Prostate gland (tissue), 2 donors: ENCODE measurements at regions of chr12 and their contacts with region 1.

Region 1: DNA sequence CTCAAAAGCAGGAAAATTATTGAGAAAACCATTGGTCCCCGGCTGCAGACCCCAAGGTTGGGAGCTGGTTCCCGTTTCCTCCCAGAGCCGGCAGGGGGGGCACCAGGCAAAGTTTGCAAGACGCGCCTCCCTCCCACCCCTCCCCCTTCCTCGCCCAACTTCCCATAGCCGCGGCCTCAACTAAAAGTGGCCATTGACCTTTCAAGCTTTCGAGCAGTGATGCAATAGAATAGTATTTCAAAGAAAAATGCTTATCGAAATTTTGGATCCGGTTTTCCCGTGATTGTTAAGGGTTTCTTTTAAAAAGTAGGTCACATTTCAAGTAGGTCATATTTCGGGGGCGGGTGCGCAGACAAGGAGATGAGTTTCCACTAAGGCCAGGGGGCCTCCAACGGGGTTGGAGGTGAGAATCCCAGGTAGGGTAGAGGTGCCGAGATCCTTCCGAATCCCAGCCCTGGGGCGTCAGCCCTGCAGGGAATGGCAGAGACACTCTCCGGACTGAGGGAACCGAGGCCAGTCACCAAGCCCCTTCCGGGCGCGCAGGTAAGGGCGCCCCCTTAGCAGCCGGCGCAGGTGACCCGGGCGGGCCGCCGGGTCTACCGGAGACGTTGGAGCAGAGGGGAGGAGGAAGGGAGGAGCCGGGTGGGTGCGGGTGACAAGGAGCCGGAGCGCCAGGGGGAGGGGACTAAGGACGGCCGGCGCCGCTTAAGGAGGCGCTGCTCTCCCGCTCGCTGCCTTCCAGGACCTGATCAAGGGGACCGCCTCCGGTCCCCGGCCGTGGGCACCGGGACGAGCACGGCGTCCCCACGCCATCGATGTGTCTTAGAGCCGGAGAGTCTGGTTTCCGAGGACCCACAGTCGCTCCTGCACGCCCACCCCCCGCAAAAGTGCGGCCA is 2.6 kb upstream of the SOCS2 start:
- DNase-seq: peak; percentile 83
- H3K4me3 ChIP-seq: peak overlapping the region; percentile 72 to 82
- H3K27ac ChIP-seq: peak overlapping the region; percentile 97 to 98
- H3K4me1 ChIP-seq: no peaks in the 10 kb centered on the region
- H3K27me3 ChIP-seq: no peaks in the 10 kb centered on the region
- CTCF ChIP-seq: peak; percentile 70 to 88 (median 88)
- POLR2A ChIP-seq: peak; percentile 24

Region 2: DNA sequence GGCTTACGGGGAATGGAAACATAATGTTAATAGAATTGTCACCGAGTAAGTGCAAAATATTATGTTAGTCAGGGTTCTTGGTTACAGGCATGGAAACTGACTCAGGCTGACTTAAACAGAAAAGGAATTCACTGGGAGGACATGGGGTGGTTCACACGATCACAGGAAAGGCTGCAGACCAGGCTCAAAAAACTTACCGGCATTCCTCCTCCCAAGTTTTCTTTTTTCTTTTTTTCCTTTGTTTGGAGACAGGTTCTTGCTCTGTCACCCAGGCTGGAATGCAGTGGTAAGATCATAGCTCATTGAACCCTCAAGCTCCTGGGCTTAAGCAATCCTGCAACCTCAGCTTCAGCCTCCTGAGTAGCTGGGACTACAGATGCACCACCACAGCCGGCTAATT is 116.3 kb before region 1 on chr12:
- intact Hi-C with region 1: no loop called
- DNase-seq: no peak
- H3K4me3 ChIP-seq: no peak overlapping the region
- H3K27ac ChIP-seq: no peak overlapping the region
- H3K4me1 ChIP-seq: no peaks in the 10 kb centered on the region
- H3K27me3 ChIP-seq: no peaks in the 10 kb centered on the region
- CTCF ChIP-seq: no peak
- POLR2A ChIP-seq: no peak

Region 3: DNA sequence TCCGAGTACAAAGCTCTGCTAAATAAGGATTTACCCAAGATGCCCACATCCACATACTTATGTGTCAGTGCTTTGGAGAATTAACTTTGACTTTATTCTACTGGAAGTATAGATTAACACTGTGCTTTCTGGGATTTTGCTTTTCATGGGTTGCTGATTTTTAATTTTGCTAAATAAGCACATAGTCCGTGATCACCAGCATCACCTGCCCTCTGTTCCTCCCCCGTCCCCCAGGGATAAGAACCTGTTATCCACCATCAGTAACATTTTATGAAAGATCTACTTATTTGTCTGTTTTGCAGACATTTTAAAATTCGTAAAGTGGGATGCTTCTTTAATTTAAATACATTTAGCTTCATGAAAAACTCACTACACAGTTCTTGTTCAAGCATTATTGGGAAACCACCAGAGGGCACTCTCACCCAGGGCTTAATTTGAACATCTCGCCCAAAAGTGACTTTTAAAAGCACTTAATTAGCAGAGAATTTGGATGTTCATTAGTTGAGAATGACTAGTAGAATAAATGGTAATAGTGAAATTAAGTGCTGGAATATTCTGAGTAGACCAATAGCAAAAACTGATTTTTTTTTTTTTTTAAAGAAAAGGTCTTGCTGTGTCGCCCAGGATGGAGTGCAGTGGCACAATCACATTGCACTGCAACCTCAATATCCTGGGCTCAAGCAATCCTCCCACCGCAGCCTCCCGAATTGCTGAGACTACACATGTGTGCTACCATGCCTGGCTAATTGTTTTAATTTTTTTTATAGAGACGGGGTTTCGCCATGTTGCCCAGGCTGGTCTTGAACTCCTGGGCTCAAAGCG is 66.9 kb before region 1 on chr12:
- intact Hi-C with region 1: loop called (anchors 5 kb)
- DNase-seq: peak; percentile 36
- H3K4me3 ChIP-seq: no peak overlapping the region
- H3K27ac ChIP-seq: no peak overlapping the region
- H3K4me1 ChIP-seq: no peaks in the 10 kb centered on the region
- H3K27me3 ChIP-seq: no peaks in the 10 kb centered on the region
- CTCF ChIP-seq: peak; percentile 54 to 87 (median 83)
- POLR2A ChIP-seq: no peak

Region 4: DNA sequence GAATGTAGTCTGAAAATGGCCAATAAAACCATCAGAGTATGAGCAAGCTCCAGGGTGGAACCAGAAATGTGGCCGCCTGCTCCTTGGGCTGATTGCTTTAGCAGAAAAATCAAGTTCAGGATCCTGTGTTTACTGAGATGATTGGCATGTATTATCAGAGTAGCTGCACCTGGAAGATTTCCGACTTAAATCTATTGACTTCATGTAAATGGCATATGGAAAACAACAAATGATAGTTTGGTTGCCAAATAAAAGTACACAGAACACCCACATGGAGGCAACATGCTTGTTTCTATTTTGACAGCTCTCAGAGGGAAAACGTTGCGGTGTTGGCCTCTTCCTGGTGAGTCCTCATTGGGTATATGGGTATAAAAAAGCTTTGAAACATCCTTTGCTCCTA is 33.9 kb after region 1 on chr12:
- intact Hi-C with region 1: no loop called
- DNase-seq: no peak
- H3K4me3 ChIP-seq: no peak overlapping the region
- H3K27ac ChIP-seq: peak overlapping the region in 1 of 2 donors; percentile 63
- H3K4me1 ChIP-seq: peaks cover 3% of the 10 kb centered on the region
- H3K27me3 ChIP-seq: no peaks in the 10 kb centered on the region
- CTCF ChIP-seq: no peak
- POLR2A ChIP-seq: no peak

Region 5: DNA sequence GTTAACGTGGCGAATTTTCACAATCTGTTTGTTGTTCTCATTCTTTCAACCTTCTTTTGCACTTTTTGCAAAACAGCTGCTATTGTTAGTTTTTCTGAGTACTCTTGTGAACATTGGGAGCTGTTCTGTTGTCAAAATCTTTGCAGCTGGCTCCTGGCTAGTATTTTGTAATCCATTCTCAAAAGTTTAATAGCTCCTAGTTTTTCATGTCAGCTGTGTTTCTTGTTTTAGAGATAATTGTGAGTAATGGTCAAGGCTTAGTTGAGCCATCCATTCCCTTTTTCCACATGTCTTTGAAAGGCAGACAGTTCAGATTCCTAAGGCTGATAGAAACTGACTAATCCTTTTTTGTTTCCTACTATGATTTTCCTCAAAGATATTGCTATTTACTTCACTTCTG is 68.2 kb after region 1 on chr12:
- intact Hi-C with region 1: loop called (anchors 10 kb)
- DNase-seq: no peak
- H3K4me3 ChIP-seq: no peak overlapping the region
- H3K27ac ChIP-seq: no peak overlapping the region
- H3K4me1 ChIP-seq: no peaks in the 10 kb centered on the region
- H3K27me3 ChIP-seq: no peaks in the 10 kb centered on the region
- CTCF ChIP-seq: no peak
- POLR2A ChIP-seq: no peak

Region 6: DNA sequence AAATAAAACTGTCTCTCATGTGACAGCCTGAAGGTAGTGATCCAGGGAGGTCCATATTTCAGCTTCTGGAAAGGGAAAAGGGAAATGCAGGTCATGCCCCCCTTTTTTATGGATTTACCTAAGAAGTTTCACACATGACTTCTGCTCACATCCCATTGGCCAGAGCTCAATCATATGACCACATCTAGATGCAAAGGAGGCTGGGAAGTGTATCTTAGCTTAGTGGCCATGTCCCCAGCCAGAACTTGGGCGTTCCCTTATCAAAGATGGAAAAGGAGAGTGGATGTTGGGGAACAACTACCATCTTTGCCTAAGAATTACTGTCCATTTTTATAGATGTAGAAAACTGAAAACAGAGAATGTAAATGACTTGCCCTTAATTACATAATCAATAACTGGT is 80.7 kb after region 1 on chr12:
- intact Hi-C with region 1: no loop called
- DNase-seq: no peak
- H3K4me3 ChIP-seq: no peak overlapping the region
- H3K27ac ChIP-seq: no peak overlapping the region
- H3K4me1 ChIP-seq: no peaks in the 10 kb centered on the region
- H3K27me3 ChIP-seq: no peaks in the 10 kb centered on the region
- CTCF ChIP-seq: no peak
- POLR2A ChIP-seq: no peak

Region 7: DNA sequence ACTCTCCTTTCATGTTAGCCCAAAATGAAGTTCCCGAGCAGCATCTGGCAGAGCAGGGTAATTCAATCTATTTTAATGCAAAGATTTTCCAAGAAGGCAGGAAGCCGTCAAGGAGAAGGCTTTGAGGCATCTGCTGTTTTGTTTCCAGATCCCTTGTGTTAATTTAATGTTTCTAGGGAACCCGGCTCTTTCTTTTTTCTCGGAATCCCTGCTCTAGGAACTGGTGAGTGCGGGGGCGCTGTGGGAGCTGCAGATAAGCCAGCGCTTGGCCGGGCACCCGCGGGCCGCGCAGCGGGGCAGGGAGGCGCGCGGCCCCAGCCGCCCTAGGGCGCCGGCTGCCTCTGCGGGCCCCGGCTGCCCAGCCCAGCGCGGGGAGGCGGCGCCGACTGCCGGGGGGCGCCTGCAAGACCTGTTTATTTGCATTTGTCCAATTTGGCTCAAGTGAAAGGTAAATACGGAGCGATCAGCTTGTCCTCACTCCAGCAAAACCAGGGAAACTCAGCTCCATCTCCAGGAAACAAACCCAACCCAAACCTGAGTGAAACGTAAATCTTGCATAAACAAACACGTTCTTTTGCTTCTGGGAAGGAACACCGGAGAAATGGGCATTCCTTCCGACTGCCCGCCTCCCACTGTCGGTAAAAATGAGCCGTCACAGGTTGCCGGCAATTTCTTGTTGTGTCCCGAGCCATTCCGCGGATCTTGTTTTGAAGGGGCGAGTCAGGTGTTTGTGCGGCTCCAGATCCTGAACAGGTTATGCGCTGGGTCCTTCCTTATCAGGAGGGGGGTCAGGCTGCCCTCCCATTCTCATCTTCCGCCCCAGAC is 172.4 kb after region 1 on chr12:
- intact Hi-C with region 1: loop called (anchors 1 kb)
- DNase-seq: peak; percentile 86
- H3K4me3 ChIP-seq: peak overlapping the region; percentile 35 to 38
- H3K27ac ChIP-seq: peak overlapping the region; percentile 89 to 95
- H3K4me1 ChIP-seq: peaks cover 13% of the 10 kb centered on the region
- H3K27me3 ChIP-seq: no peaks in the 10 kb centered on the region
- CTCF ChIP-seq: peak in 3 of 4 experiments; percentile 34 to 74 (median 65)
- POLR2A ChIP-seq: peak; percentile 17

Region 8: DNA sequence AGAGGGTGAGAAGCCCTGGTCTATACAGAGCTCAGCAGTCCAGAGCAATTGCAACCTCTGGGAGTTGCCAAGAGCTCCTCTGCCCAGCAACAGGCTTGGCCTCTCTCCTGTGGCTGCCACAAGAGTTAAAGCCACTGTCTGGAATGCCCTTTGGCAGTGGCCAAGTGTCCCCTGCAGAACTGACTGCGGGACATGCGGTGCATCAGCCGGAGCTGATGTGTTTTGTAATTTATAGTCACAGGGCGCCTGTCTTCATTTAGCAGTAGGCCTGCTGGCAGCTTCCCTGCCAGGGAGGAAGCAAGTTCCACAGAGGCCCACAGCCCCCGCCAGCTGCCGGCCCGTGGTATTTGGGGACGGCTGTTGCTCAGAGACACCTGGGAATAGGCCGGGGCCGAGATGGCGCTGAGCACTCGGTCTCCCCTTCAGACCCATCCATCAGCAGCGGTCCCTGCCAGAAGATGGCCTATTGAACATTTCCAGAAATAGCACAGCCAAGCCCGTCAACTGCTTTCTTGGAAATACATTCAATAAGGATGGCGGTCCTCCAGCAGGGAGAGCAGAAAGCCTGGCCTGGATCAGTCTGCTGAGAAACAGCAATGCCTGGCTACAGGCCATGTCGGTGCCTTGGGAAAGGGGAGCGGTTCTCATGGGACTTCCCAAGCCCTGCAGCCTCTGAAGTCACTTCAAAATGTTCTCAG is 324.6 kb after region 1 on chr12:
- intact Hi-C with region 1: loop called (anchors 5 kb)
- DNase-seq: peak; percentile 84
- H3K4me3 ChIP-seq: no peak overlapping the region
- H3K27ac ChIP-seq: peak overlapping the region; percentile 53 to 64
- H3K4me1 ChIP-seq: peaks cover 14% of the 10 kb centered on the region
- H3K27me3 ChIP-seq: no peaks in the 10 kb centered on the region
- CTCF ChIP-seq: peak in 1 of 4 experiments; percentile 5
- POLR2A ChIP-seq: no peak

Region 9: DNA sequence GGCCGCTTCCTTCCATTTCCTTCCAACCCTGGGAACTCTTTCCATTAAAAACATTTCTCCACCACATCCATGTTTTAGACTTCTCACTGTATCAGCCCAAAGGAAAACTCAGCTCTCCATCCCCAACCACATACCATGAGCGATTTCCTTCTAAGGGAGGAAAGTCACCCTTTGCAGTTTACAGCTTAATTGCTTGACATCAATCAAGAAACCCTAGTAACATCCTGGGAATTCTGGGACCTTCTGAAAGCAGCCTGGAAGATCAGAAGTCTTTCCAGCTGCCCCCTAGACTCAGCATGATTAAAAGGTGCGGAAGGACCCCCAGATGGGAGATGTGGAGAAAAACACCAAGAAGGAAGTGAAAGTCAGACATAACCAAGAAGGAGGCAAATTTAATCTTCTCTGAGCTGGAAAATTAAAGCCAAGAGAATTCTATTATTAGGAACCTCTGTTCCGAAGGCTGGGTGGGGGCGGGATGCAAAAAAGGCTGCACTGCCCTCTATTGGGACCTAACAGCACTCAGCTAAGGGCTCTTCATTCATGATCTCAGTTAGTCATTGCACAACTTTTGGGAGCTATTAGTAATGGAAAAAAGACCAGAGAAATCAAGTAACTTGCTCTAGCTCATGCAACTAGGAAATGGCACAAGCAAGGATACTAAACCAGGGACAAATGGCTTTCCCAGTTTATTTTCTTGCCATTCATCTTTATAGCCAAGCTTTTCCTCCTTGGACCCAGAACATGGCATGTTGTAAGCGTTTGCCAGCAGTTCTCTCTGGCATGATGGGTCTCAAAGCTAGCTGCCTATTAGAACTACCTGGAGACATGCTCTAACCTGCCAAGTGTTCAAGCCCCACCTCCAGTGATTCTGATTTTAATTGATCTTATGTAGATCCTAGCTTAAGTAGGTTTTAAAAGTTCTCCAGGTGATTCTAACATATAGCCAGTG is 505.4 kb after region 1 on chr12:
- intact Hi-C with region 1: loop called (anchors 5 kb)
- DNase-seq: peak; percentile 49
- H3K4me3 ChIP-seq: no peak overlapping the region
- H3K27ac ChIP-seq: peak overlapping the region; percentile 11 to 45
- H3K4me1 ChIP-seq: no peaks in the 10 kb centered on the region
- H3K27me3 ChIP-seq: no peaks in the 10 kb centered on the region
- CTCF ChIP-seq: peak in 3 of 4 experiments; percentile 46 to 57 (median 57)
- POLR2A ChIP-seq: no peak